ENCODE measurements at regions of chr10 and their contacts with region 1.

Region 1: DNA sequence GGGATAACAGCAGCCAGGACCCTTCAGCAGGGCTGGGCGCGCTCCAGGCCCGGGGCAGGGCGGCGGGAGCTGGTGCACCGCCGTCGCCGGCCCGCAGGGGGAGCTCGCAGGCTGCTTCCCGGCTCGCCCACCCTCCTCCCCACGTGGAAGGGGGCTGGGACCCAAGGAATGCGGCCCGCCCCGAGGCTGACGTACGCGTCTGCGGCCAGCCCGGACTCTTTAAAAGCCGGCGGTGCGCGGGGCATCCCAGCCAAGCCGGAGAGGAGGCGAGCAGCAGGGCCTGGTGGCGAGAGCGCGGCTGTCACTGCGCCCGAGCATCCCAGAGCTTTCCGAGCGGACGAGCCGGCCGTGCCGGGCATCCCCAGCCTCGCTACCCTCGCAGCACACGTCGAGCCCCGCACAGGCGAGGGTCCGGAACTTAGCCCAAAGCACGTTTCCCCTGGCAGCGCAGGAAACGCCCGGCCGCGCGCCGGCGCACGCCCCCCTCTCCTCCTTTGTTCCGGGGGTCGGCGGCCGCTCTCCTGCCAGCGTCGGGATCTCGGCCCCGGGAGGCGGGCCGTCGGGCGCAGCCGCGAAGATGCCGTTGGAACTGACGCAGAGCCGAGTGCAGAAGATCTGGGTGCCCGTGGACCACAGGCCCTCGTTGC is at the start of gene PFKFB3:
- DNase-seq: peak; percentile 92
- H3K4me3 ChIP-seq: peak within 1 kb of the TSS; percentile 60 to 98 (median 94)
- H3K27ac ChIP-seq: peak within 1 kb of the TSS; percentile 90
- H3K4me1 ChIP-seq: peaks cover 28% of the 10 kb centered on the region
- H3K27me3 ChIP-seq: no peaks in the 10 kb centered on the region
- CTCF ChIP-seq: peak; percentile 69 to 92
- total RNA-seq, gene PFKFB3: 24.0 to 49.5 TPM

Region 2: DNA sequence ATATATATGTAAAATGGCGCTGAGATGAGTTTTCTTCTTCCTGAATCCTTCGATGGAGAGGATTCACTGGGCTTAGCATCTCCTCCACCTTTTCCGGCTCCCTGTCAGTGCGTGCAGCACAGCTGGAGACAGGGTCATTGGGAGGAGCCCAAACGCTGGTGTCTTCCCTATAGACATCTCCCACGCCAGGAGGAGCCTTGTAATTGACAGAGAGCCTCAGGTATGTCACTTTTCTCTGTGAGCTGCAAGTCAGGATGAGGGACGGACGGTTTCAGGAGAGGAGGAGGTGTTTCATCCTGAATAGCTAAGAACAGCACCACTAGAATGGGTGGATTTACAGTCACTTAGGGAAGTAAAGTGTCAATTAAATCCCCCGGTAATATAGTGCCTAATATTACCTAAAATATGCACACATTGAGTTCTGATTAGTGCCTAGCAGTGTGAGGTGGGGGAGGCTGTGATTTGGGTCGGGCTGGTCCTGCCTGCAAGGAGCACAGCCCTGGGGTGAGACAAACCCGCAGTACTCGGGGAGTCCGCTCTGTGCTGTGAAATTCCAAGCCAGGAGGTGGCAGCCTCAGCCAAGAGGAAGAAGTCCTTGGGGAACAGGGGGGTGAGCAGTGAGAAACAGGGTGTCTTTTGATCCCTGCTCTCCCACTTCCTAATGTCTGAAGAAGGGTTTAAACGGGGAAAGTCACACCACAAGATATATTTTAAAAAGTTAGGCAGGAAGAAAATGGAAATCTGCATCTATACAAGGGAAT is 253.6 kb before region 1 on chr10:
- CTCF ChIA-PET with region 1: no interaction called
- dilution Hi-C with region 1: no loop called
- in situ Hi-C with region 1: no loop called
- intact Hi-C with region 1: loop called (anchors 1 kb)
- DNase-seq: peak; percentile 55
- H3K4me3 ChIP-seq: no peak overlapping the region
- H3K27ac ChIP-seq: no peak overlapping the region
- H3K4me1 ChIP-seq: peaks cover 40% of the 10 kb centered on the region
- H3K27me3 ChIP-seq: no peaks in the 10 kb centered on the region
- CTCF ChIP-seq: peak; percentile 54 to 73

Region 3: DNA sequence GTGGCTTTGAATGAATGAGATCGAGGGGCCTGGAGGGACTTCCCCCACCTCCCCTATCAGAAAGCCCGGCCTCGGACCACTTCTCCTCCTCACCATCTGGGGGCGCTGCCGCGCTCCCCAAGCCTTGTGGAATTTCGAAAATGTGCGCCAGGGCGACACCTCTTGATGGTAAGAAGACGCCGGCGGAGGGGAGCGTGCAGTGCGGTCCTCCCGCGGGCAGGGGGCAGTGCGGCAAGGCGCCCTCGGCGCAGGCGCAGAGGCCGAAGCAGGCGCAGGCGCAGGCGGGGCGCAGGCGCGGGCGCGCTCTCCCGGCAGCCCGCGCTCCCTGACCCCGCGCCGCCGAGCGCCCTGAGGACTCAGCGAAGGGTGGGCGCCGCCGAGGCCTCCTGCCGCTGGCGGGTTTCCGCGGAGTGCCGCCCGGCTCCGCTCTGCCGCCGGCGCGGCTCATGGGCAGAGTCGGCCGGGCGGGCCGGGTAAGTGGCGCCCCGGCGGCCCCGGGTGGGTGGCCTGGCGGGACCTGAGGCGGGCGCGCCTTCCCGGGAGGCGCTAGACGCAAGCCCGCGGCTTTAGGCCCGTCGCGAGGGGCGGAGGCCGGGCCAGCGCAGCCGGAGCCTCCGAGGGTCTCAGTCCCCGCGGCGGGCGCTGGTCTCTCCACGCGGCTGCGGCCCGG is 114.0 kb before region 1 on chr10 and contains the start of gene RBM17:
- CTCF ChIA-PET with region 1: no interaction called
- dilution Hi-C with region 1: no loop called
- in situ Hi-C with region 1: no loop called
- intact Hi-C with region 1: loop called (anchors 1 kb)
- DNase-seq: peak; percentile 89
- H3K4me3 ChIP-seq: peak within 1 kb of the TSS; percentile 74 to 77 (median 76)
- H3K27ac ChIP-seq: peak within 1 kb of the TSS; percentile 82
- H3K4me1 ChIP-seq: peaks cover 15% of the 10 kb centered on the region
- H3K27me3 ChIP-seq: peaks cover 2% of the 10 kb centered on the region
- CTCF ChIP-seq: peak; percentile 100
- total RNA-seq, gene RBM17: 31.5 to 120 TPM

Region 4: DNA sequence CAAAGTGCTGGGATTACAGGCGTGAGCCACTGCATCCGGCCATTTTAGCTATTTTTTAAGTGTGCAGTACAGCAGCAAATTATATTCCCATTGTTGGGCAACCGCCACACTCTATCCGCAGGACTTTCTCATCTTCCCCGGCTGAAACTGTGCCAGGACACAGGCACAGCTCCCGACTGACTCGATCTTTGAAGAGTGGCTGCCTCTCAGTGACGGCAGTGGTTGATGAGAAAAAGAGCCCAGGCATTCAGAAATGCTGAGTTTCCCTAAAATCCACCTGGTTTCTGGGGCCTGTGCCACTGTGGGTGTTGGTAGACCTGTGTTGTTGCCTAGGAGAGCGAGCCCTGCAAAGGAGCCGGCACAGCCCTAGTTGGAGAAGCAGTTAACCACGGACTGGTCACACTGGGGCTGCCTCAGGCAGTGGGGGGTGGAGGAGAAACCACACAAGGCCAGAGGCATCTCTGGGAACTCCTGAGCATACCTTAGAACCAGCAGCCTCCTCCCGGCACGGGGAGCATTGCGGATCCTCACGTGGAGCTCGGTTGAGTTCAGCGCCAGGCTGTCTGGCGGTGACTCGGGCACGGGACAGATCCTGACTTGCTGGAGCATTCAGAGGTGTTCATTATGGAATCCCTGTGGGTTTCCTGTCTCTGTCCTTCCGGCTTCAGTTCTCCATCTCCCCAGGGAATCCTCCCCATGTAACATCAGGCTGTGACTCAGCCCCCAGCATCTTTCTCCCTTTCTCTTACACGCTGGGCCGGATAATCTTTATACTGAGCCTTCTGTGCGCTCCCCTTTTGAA is 16.1 kb after region 1 on chr10:
- CTCF ChIA-PET with region 1: no interaction called
- dilution Hi-C with region 1: no loop called
- in situ Hi-C with region 1: no loop called
- intact Hi-C with region 1: loop called (anchors 1 kb)
- DNase-seq: peak; percentile 100
- H3K4me3 ChIP-seq: no peak overlapping the region
- H3K27ac ChIP-seq: peak overlapping the region; percentile 84
- H3K4me1 ChIP-seq: peaks cover 36% of the 10 kb centered on the region
- H3K27me3 ChIP-seq: no peaks in the 10 kb centered on the region
- CTCF ChIP-seq: no peak

Region 5: GRCh38 chr10:6275022-6275997 is 72.5 kb after region 1 on chr10:
- CTCF ChIA-PET with region 1: no interaction called
- dilution Hi-C with region 1: no loop called
- in situ Hi-C with region 1: no loop called
- intact Hi-C with region 1: loop called (anchors 1 kb)
- DNase-seq: peak; percentile 99
- H3K4me3 ChIP-seq: peak overlapping the region in 1 of 3 experiments; percentile 34
- H3K27ac ChIP-seq: peak overlapping the region; percentile 84
- H3K4me1 ChIP-seq: peaks cover 27% of the 10 kb centered on the region
- H3K27me3 ChIP-seq: no peaks in the 10 kb centered on the region
- CTCF ChIP-seq: no peak

Region 6: DNA sequence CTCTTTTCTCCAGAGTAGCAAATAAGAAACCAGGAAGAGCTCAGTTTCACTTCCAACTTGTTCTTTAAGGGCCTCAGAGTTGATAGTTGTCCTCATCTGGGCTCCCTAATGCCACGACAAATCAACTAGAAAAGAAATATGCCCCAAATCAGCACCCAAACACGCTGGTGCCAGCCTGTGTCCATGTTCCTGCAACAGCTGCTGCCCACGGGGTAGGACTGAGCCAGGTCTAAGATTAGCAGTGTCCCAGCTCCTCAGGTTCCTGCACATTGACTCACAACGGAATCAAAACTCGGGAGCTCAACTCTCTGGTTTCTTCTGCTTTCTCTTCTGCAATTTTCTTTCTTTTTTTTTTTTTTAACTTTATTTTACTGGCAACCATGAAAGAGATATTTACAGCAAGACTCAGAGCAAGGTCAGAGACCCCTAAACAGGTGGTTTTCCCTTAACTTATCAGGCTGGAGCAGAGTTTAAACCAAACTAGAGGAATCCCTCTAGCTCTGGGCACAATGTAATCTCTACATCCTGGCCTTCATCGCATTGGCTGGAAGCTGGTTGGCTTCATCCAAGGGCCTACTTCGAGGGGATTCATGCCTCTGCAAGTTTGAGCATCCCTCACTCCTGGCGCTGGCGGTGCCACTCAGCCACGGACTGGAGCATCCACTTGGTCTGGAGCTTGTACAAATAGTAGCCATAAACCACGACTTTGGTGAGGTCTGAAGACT is 126.1 kb after region 1 on chr10:
- CTCF ChIA-PET with region 1: no interaction called
- dilution Hi-C with region 1: no loop called
- in situ Hi-C with region 1: no loop called
- intact Hi-C with region 1: loop called (anchors 5 kb)
- DNase-seq: no peak
- H3K4me3 ChIP-seq: no peak overlapping the region
- H3K27ac ChIP-seq: no peak overlapping the region
- H3K4me1 ChIP-seq: no peaks in the 10 kb centered on the region
- H3K27me3 ChIP-seq: no peaks in the 10 kb centered on the region
- CTCF ChIP-seq: no peak